ENCODE measurements at regions of chr18 and their contacts with region 1.

Region 1: DNA sequence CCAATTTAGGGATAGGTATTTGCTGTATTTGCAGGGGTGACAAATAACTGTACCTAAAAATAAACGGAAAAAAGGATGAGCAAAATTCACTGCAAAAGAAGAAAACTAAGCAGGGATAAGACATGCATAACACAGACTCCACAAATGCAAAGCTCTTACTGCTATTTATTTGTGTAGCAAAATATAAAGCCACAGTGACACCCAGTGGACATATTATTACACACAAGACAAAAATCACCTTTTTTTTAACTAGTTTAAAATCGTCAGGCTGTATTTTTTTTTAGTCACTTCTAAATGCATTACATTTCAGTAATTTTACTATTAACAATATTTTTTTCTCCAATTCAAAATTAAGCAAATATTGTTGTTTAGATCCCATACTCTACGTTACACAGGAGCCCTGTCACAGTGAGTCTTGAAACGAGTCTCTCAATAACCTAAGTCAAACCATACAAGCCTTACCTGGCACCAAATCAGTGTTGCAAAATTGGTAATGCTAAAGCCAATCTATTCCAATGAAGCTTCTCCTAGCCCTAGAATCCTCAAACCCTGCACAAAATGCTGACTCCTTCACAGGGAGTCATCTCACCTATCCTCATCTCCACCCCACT is 23.7 kb downstream of the METTL4 start:
- DNase-seq: peak; percentile 46
- H3K4me3 ChIP-seq: no peak overlapping the region
- H3K27ac ChIP-seq: no peak overlapping the region
- H3K4me1 ChIP-seq: no peaks in the 10 kb centered on the region
- H3K27me3 ChIP-seq: no peaks in the 10 kb centered on the region
- CTCF ChIP-seq: peak; percentile 79
- EP300 ChIP-seq: no peak
- RAD21 ChIP-seq: peak; percentile 74

Region 2: GRCh38 chr18:2104620-2105462 is 442.7 kb before region 1 on chr18:
- CTCF ChIA-PET with region 1: interaction called, 20 read pairs
- POLR2A ChIA-PET with region 1: no interaction called
- DNase-seq: peak; percentile 62
- H3K4me3 ChIP-seq: peak overlapping the region in 1 of 2 experiments; percentile 30; a peak in 2 of 4 replicates
- H3K27ac ChIP-seq: no peak overlapping the region
- H3K4me1 ChIP-seq: no peaks in the 10 kb centered on the region
- H3K27me3 ChIP-seq: no peaks in the 10 kb centered on the region
- CTCF ChIP-seq: peak; percentile 85
- EP300 ChIP-seq: no peak
- RAD21 ChIP-seq: peak; percentile 59

Region 3: DNA sequence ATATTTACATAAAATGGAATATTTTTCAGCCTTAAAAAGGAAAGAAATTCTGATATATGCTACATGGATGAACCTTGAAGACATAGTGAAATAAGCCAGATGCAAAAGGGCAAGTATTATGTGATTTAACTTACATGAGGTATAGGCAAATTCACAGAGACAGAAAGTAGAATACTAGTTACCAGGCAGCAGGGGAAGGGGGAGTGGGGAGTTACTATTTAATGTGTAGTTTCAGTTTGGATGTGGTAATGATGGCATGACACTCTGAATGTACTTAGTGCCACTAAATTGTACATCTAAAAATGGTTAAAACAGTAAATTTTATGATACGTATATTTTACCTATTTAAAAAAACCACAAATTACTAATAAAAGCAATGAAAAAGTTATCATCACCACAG is 11.7 kb after region 1 on chr18:
- CTCF ChIA-PET with region 1: interaction called, 24 read pairs
- POLR2A ChIA-PET with region 1: no interaction called
- DNase-seq: no peak
- H3K4me3 ChIP-seq: no peak overlapping the region
- H3K27ac ChIP-seq: no peak overlapping the region
- H3K4me1 ChIP-seq: no peaks in the 10 kb centered on the region
- H3K27me3 ChIP-seq: no peaks in the 10 kb centered on the region
- CTCF ChIP-seq: no peak
- EP300 ChIP-seq: no peak
- RAD21 ChIP-seq: no peak